ENCODE measurements at regions of chr1 and their contacts with region 1.

Region 1: GRCh38 chr1:162040681-162041080 is 17.0 kb upstream of the OLFML2B start:
- DNase-seq: no peak
- H3K4me3 ChIP-seq: no peak overlapping the region
- H3K27ac ChIP-seq: no peak overlapping the region
- H3K27me3 ChIP-seq: peaks cover 2% of the 10 kb centered on the region
- CTCF ChIP-seq: peak; percentile 64

Region 2: DNA sequence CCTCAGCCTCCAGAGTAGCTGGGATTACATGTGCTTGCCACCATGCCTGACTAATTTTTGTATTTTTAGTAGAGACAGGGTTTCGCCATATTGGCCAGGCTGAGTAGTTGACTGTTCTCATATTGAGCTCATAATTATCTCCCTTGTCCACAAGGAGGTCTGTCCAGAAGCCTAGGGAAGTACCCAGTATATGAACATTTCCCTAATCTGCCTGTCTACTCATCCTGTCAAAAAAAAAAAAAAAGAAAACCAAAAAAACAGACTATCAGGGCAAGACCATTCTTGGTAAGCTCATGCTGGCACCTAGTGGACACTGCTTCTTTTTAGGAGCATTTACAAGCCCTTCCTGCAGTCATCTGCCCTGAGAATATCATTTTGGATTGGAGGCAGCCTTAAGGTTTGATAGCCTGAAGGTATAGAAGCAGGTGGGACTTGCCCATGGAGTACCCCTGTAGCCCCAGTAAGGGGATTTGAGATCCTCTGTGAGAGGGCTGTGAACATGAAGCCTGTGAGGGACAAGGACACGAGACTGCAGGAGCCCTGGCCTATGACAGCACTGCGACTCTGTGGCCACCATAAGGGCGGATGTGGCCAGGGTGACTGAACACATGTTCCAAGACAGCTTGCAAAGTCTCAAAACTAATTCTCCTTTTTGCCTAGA is 301.9 kb before region 1 on chr1:
- CTCF ChIA-PET with region 1: interaction called, 18 read pairs
- POLR2A ChIA-PET with region 1: no interaction called
- DNase-seq: peak; percentile 55
- H3K4me3 ChIP-seq: no peak overlapping the region
- H3K27ac ChIP-seq: no peak overlapping the region
- H3K27me3 ChIP-seq: no peaks in the 10 kb centered on the region
- CTCF ChIP-seq: peak; percentile 70

Region 3: DNA sequence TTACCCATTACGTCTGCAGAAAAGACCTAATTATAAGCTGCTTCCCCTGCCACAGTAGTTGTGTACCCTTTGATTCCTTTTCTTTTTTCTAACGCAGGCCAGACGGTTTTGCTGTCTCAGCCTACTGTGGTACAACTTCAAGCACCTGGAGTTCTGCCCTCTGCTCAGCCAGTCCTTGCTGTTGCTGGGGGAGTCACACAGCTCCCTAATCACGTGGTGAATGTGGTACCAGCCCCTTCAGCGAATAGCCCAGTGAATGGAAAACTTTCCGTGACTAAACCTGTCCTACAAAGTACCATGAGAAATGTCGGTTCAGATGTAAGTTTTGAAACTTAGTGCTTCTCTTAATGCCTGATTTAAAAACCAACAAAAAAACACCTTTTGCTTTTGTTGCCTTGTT is 238.7 kb before region 1 on chr1:
- CTCF ChIA-PET with region 1: interaction called, 771 read pairs
- POLR2A ChIA-PET with region 1: no interaction called
- DNase-seq: no peak
- H3K4me3 ChIP-seq: no peak overlapping the region
- H3K27ac ChIP-seq: no peak overlapping the region
- H3K27me3 ChIP-seq: no peaks in the 10 kb centered on the region
- CTCF ChIP-seq: no peak

Region 4: DNA sequence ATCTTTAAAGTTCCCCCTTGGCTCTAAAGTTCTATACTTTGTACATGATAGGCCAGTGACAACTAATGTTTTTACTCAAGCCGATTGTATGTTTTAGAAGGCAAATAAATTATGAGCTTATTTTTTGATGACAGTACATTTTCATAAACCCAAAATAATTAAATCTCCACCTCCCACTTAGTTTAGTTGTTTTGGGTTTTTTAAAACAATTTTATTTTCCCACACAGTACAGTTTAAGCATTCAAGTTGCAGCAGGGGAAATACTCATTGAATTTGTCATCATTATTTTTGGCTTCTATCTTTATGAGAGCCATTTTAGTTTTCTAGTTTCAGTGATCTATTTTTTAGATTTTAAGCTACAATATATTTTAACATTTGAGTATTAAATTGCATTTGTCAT is 110.6 kb before region 1 on chr1:
- CTCF ChIA-PET with region 1: interaction called, 13 read pairs
- POLR2A ChIA-PET with region 1: no interaction called
- DNase-seq: no peak
- H3K4me3 ChIP-seq: no peak overlapping the region
- H3K27ac ChIP-seq: no peak overlapping the region
- H3K27me3 ChIP-seq: no peaks in the 10 kb centered on the region
- CTCF ChIP-seq: no peak

Region 5: DNA sequence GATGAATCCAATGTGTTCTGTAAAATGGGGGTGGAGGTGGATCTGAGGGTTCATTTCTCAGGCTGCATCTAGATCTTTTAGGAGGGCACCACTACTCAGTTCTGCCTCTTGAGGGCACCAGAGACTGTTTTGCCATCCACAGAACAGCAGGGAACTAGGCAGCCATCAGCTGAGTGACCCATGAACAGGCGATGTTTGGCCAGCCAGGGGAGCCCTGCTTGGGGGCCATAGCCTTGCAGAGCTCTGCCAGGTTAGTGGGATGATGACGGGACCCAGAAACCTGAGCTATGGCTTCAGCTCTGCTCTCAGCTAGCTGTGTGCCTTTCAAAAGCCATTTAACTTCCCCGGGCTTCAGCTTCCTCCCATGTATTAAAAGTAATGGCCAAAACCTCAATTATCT is 15.4 kb after region 1 on chr1:
- CTCF ChIA-PET with region 1: interaction called, 18 read pairs
- POLR2A ChIA-PET with region 1: no interaction called
- DNase-seq: peak; percentile 23
- H3K4me3 ChIP-seq: no peak overlapping the region
- H3K27ac ChIP-seq: no peak overlapping the region
- H3K27me3 ChIP-seq: peaks cover 15% of the 10 kb centered on the region
- CTCF ChIP-seq: peak; percentile 98

Measured in AG04450 (cell line).